B cell (primary cell): ENCODE measurements at regions of chr15 and their contacts with region 1.

Region 1: DNA sequence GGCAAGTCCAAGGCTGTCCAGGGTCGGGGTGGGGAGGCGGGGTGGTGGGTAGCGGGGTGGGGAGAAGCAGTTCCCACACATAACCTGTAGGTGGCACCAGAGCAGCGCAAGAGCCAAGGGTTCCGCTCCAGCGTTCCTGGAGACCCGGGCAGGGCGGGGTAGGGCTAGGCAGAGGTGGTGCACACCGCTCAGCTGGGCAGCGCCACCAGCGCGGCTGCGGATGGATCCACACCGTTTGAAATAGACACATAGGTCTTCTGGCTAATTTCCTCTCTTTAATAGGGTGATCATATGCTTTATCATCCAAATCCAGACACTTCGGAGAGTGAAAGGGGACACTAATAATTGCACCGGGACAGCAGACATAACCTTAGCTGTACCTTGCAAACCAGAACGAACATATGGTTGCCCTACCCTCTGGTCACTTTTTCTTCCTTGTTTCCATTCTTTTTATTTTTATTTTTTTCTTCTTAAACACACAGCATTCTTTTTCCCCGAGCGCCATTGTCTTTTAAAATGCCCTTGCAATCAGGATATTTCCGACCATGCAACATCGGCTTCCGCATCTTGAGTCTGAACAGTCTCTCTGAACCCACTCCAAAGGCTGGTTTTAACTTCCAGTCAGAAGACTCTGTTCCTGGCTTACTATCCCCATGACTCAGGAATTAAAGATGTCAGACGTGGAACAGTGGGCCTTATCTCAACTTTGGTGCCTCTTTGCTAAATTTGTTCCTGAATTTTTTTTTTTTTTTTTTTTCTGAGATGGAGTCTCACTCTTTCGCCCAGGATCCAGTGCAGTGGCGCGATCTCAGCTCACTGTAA is 12.5 kb upstream of the ZSCAN2 start:
- DNase-seq: peak; percentile 90
- ATAC-seq: peak; percentile 100
- H3K4me3 ChIP-seq: peak overlapping the region in 4 of 5 experiments; percentile 20 to 47 (median 27)
- H3K4me3 Mint-ChIP-seq: peak overlapping the region; percentile 79
- H3K27ac ChIP-seq: no peak overlapping the region
- H3K27ac Mint-ChIP-seq: peak overlapping the region; percentile 41
- H3K4me1 ChIP-seq: peaks cover 5 to 6% of the 10 kb centered on the region in 2 donors
- H3K4me1 Mint-ChIP-seq: peaks cover 4% of the 10 kb centered on the region
- H3K27me3 ChIP-seq: peaks cover 0 to 8% (median 0%) of the 10 kb centered on the region in 4 experiments
- H3K27me3 Mint-ChIP-seq: peaks cover 14% of the 10 kb centered on the region
- CTCF ChIP-seq: peak; percentile 87

Region 2: DNA sequence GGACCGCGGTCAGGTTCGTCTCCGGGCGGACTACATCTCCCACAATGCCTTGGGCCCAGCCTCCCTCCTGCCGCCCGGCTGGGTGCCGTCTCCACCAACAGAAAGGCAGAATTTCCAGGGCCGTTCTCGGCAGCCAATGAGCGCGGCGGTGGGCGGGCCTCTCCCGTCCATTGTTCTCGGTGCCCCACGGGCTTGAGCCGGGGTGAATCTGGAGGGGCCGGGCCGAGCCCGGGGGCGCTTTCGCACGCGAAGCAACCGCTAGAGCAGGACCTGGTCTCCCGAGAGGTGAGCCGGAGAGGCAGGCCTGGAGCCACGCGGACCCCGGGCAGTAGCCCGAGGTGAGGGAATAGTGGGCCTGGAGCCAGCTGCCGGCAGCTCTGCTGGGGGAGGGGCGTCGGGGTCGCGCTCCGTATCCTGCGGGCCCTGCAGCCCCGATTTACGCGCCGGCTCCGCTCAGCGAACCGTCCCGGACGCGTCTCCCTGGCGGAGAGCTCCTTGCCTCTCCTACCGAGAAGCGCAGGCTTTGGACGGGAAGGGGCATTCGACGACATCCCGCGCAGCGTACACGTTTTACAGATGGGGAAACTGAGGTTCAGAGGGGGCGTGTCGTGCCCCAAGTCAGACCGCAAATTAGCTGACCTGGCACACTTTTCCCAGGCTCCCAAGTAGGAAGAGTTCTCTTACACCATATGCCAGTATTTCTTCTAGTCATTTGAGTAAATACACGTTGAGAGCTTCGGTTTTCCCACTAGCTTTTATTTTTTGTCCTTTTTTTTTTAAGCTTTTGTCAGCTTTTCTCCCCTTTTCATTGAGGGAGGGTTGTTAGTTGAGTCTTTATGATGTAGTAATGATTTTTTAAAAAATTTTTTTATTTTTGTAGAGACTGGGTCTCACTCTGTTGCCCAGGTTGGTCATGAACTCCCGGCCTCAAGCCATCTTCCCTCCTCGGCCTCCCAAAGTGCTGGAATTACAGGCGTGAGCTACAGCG is 12.9 kb after region 1 on chr15 and contains the start of gene ZSCAN2:
- CTCF ChIA-PET with region 1: interaction called, 11 read pairs
- POLR2A ChIA-PET with region 1: no interaction called
- intact Hi-C with region 1: loop called (anchors 1 kb)
- DNase-seq: peak; percentile 93
- ATAC-seq: peak; percentile 94
- H3K4me3 ChIP-seq: peak within 1 kb of the TSS; percentile 78 to 95 (median 86)
- H3K4me3 Mint-ChIP-seq: peak within 1 kb of the TSS; percentile 99
- H3K27ac ChIP-seq: peak within 1 kb of the TSS; percentile 32 to 47
- H3K27ac Mint-ChIP-seq: peak within 1 kb of the TSS; percentile 96
- H3K4me1 ChIP-seq: peaks cover 29 to 52% of the 10 kb centered on the region in 2 donors
- H3K4me1 Mint-ChIP-seq: peaks cover 64% of the 10 kb centered on the region
- H3K27me3 ChIP-seq: no peaks in the 10 kb centered on the region
- H3K27me3 Mint-ChIP-seq: no peaks in the 10 kb centered on the region
- CTCF ChIP-seq: no peak
- total RNA-seq, gene ZSCAN2: 16.2 and 18.6 TPM in 2 replicates

Region 3: GRCh38 chr15:84658080-84658787 is 70.0 kb after region 1 on chr15 and contains the start of gene NMB:
- CTCF ChIA-PET with region 1: interaction called, 11 read pairs
- POLR2A ChIA-PET with region 1: interaction called, 4 read pairs
- intact Hi-C with region 1: loop called (anchors 1 kb)
- DNase-seq: peak; percentile 93
- ATAC-seq: peak; percentile 76
- H3K4me3 ChIP-seq: peak within 1 kb of the TSS; percentile 38 to 86 (median 63)
- H3K4me3 Mint-ChIP-seq: peak within 1 kb of the TSS; percentile 83
- H3K27ac ChIP-seq: peak within 1 kb of the TSS; percentile 63 to 69
- H3K27ac Mint-ChIP-seq: peak within 1 kb of the TSS; percentile 87
- H3K4me1 ChIP-seq: peaks cover 22 to 30% of the 10 kb centered on the region in 2 donors
- H3K4me1 Mint-ChIP-seq: peaks cover 32% of the 10 kb centered on the region
- H3K27me3 ChIP-seq: no peaks in the 10 kb centered on the region
- H3K27me3 Mint-ChIP-seq: no peaks in the 10 kb centered on the region
- CTCF ChIP-seq: peak; percentile 78
- total RNA-seq, gene NMB: 3.0 and 5.0 TPM in 2 replicates

Region 4: DNA sequence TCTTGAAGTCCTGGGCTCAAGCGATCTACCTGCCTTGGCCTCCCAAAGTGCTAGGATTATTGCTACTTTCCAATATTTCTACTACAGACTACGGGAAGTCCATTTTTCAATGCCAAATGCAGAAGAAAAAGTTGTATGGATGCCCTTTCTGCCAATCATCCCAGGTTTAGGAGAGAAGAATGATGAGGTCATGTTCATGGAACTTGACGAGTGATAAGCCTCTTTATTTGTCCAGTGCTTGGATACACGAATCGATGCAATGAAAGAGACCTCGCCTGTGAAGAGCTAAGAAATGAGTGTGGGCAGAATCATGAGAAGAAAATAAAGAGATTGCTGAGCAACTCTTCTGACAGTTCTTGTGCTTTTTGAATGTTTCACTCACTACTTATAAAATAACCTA is 295.2 kb after region 1 on chr15:
- CTCF ChIA-PET with region 1: interaction called, 19 read pairs
- POLR2A ChIA-PET with region 1: no interaction called
- intact Hi-C with region 1: loop called (anchors 1 kb)
- DNase-seq: no peak
- ATAC-seq: no peak
- H3K4me3 ChIP-seq: no peak overlapping the region
- H3K4me3 Mint-ChIP-seq: no peak overlapping the region
- H3K27ac ChIP-seq: no peak overlapping the region
- H3K27ac Mint-ChIP-seq: no peak overlapping the region
- H3K4me1 ChIP-seq: no peaks in the 10 kb centered on the region
- H3K4me1 Mint-ChIP-seq: no peaks in the 10 kb centered on the region
- H3K27me3 ChIP-seq: no peaks in the 10 kb centered on the region
- H3K27me3 Mint-ChIP-seq: no peaks in the 10 kb centered on the region
- CTCF ChIP-seq: no peak

Region 5: DNA sequence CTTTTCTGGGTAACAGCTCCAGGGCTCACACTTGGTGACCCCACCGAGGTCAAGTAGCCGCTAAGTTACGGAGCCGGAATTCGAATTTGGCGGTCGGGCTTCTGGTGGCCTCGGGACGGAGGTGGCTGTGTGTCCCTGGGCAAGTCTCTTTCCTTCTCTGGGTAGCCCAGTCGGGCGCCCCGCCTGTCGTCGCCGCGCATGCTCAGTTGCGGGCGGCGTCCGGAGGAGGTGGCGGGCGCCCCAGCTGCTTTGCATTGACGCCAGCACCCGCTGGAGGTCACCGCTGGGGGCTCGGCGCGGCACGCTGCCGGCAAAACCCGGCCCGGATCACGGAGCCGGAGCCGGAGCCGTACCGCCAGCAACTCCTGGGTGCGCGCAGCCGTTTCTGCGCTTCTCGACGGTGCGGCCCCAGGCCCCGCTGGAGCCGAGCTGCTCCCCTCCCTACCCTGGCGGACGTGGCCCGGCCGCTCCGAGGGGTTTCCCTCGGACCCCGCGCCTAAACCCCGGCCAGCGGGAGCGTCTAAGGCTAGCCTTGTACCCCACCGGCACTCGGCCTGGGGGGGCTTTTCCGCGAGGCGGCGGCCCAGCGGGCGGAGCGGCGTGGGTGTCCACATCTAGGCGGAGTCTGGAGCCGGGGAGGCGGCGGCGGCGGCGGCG is 392.9 kb after region 1 on chr15:
- CTCF ChIA-PET with region 1: interaction called, 3 read pairs
- POLR2A ChIA-PET with region 1: interaction called, 4 read pairs
- intact Hi-C with region 1: loop called (anchors 5 kb)
- DNase-seq: peak; percentile 98
- ATAC-seq: peak; percentile 72
- H3K4me3 ChIP-seq: peak overlapping the region; percentile 66 to 97 (median 79)
- H3K4me3 Mint-ChIP-seq: peak overlapping the region; percentile 96
- H3K27ac ChIP-seq: peak overlapping the region; percentile 97
- H3K27ac Mint-ChIP-seq: peak overlapping the region; percentile 97
- H3K4me1 ChIP-seq: peaks cover 21 to 22% of the 10 kb centered on the region in 2 donors
- H3K4me1 Mint-ChIP-seq: peaks cover 41% of the 10 kb centered on the region
- H3K27me3 ChIP-seq: no peaks in the 10 kb centered on the region
- H3K27me3 Mint-ChIP-seq: no peaks in the 10 kb centered on the region
- CTCF ChIP-seq: no peak

Region 6: GRCh38 chr15:85044251-85044853 is 456.1 kb after region 1 on chr15:
- CTCF ChIA-PET with region 1: interaction called, 21 read pairs
- POLR2A ChIA-PET with region 1: no interaction called
- intact Hi-C with region 1: loop called (anchors 1 kb)
- DNase-seq: peak; percentile 71
- ATAC-seq: peak; percentile 49
- H3K4me3 ChIP-seq: no peak overlapping the region
- H3K4me3 Mint-ChIP-seq: no peak overlapping the region
- H3K27ac ChIP-seq: no peak overlapping the region
- H3K27ac Mint-ChIP-seq: no peak overlapping the region
- H3K4me1 ChIP-seq: peaks cover 3 to 9% of the 10 kb centered on the region in 2 donors
- H3K4me1 Mint-ChIP-seq: peaks cover 32% of the 10 kb centered on the region
- H3K27me3 ChIP-seq: no peaks in the 10 kb centered on the region
- H3K27me3 Mint-ChIP-seq: no peaks in the 10 kb centered on the region
- CTCF ChIP-seq: peak; percentile 67